ENCODE measurements at regions of chr5 and their contacts with region 1.

Region 1: GRCh38 chr5:159638954-159639559 is 277.2 kb upstream of the ADRA1B start:
- DNase-seq: no peak
- ATAC-seq: no peak
- H3K4me3 ChIP-seq: no peak overlapping the region
- H3K27ac ChIP-seq: no peak overlapping the region
- H3K4me1 ChIP-seq: no peaks in the 10 kb centered on the region
- H3K27me3 ChIP-seq: no peaks in the 10 kb centered on the region

Region 2: DNA sequence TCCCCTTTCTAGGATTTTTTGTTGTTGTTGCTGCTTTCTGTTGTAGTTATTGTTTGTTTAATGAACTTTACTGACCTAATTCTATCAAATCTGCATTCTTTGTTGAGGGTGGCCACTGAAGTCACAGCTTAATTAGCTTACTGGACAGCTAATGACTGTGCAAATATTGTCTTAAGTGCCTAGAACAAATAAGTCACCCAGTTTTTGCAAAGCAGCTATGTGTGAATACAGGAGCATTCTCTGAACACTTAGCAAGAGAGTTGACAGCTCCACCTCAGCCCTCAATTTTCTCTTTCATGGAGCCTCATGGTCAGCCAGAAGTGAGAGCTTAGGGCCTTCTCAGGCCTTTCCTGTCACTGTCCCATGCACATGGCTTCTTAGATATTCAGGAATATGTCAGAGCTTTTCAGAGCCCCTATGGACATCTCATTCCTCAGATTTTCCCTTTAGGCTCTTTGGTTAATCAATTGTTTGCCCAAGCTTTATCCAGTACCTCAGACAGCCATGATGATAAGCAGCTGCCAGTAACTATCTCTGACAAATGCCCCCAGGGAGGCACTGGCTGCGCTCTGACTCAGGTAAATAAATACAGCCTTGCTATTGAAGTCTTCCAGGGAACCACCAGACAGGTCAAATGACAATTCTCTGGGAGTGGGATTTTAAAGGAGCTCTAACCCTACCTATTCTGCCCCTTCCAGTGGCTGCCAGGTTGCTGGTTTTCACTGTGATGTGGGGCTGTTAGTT is 67.4 kb before region 1 on chr5:
- intact Hi-C with region 1: no loop called
- DNase-seq: no peak
- ATAC-seq: no peak
- H3K4me3 ChIP-seq: no peak overlapping the region
- H3K27ac ChIP-seq: no peak overlapping the region
- H3K4me1 ChIP-seq: no peaks in the 10 kb centered on the region
- H3K27me3 ChIP-seq: no peaks in the 10 kb centered on the region

Region 3: DNA sequence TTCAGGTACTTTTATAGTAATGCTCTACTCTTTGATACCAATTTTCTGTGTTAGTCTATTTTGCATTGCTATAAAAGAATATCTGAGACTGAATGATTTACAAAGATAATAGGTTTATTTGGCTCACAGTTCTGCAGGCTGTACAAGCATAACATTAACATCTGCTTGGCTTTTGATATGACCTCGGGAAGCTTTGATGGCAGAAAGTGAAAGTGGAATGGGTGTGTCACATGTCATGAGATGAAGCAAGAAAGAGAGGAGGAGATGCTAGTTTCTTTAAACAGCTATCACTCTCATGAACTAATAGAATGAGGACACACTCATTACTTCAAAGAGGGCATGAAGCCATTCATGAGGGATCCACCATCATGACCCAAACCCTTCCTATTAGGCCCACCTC is 37.8 kb before region 1 on chr5:
- intact Hi-C with region 1: no loop called
- DNase-seq: no peak
- ATAC-seq: no peak
- H3K4me3 ChIP-seq: no peak overlapping the region
- H3K27ac ChIP-seq: no peak overlapping the region
- H3K4me1 ChIP-seq: peaks cover 0 to 3% of the 10 kb centered on the region in 2 donors
- H3K27me3 ChIP-seq: no peaks in the 10 kb centered on the region

Region 4: GRCh38 chr5:159650803-159651202 is 11.7 kb after region 1 on chr5:
- intact Hi-C with region 1: loop called in 1 of 2 experiments (anchors 2 kb)
- DNase-seq: no peak
- ATAC-seq: no peak
- H3K4me3 ChIP-seq: no peak overlapping the region
- H3K27ac ChIP-seq: no peak overlapping the region
- H3K4me1 ChIP-seq: no peaks in the 10 kb centered on the region
- H3K27me3 ChIP-seq: no peaks in the 10 kb centered on the region

Measured in aorta (tissue), 5 donors.